ENCODE measurements at regions of chr6 and their contacts with region 1.

Region 1: GRCh38 chr6:157514659-157515496 is 133.9 kb downstream of the ZDHHC14 start:
- DNase-seq: peak; percentile 94 to 97 (median 96)
- ATAC-seq: peak; percentile 83
- H3K4me3 ChIP-seq: peak overlapping the region; percentile 36
- H3K27ac ChIP-seq: peak overlapping the region; percentile 98
- H3K4me1 ChIP-seq: peaks cover 63 to 72% of the 10 kb centered on the region in 2 experiments
- H3K27me3 ChIP-seq: no peaks in the 10 kb centered on the region
- CTCF ChIP-seq: no peak; a peak in 1 of 6 replicates
- EP300 ChIP-seq: peak; percentile 99
- POLR2A ChIP-seq: peak; percentile 73
- RAD21 ChIP-seq: no peak; a peak in 2 of 4 replicates

Region 2: GRCh38 chr6:155645325-155645724 is 1869.6 kb before region 1 on chr6:
- CTCF ChIA-PET with region 1: no interaction called
- POLR2A ChIA-PET with region 1: no interaction called
- in situ Hi-C with region 1: no loop called
- intact Hi-C with region 1: loop called (anchors 10 kb)
- DNase-seq: peak in 1 of 4 experiments; percentile 26
- ATAC-seq: peak; percentile 15; the same call in 1 of the 3 replicates
- H3K4me3 ChIP-seq: no peak overlapping the region
- H3K27ac ChIP-seq: no peak overlapping the region
- H3K4me1 ChIP-seq: peaks cover 0 to 18% of the 10 kb centered on the region in 2 experiments; a peak in 2 of 5 replicates
- H3K27me3 ChIP-seq: no peaks in the 10 kb centered on the region
- CTCF ChIP-seq: no peak
- EP300 ChIP-seq: no peak
- POLR2A ChIP-seq: no peak
- RAD21 ChIP-seq: no peak

Region 3: DNA sequence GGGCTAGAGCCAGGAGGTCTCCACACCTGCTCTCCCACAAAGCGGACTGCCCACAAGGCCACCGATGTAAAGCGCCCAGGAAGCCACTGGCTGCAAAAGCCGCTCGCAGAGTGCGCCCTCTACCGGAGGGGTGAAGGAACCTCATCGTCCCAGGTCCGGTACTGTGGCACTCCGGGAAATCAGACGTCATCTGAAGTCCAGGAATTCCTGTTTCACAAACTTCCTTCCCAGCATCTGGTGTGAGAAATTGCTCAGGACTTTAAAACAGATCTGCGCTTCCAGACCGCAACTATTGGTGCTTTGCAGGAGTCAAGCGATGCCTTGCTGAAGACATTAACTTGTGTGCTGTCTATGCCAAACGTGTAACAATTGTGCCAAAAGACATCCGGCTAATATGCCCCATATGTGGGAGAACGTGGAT is 852.8 kb before region 1 on chr6:
- CTCF ChIA-PET with region 1: no interaction called
- POLR2A ChIA-PET with region 1: no interaction called
- in situ Hi-C with region 1: no loop called
- intact Hi-C with region 1: no loop called
- DNase-seq: peak; percentile 86 to 88 (median 86)
- ATAC-seq: peak; percentile 99
- H3K4me3 ChIP-seq: 0 out of 2 replicates have a peak overlapping the region, but pooled peaks have one; percentile 6
- H3K27ac ChIP-seq: no peak overlapping the region
- H3K4me1 ChIP-seq: no peaks in the 10 kb centered on the region; a peak in 2 of 5 replicates
- H3K27me3 ChIP-seq: peaks cover 5 to 17% of the 10 kb centered on the region in 2 experiments; a peak in 4 of 5 replicates
- CTCF ChIP-seq: peak; percentile 93 to 97 (median 93)
- EP300 ChIP-seq: no peak
- POLR2A ChIP-seq: no peak
- RAD21 ChIP-seq: peak; percentile 69 to 86

Region 4: DNA sequence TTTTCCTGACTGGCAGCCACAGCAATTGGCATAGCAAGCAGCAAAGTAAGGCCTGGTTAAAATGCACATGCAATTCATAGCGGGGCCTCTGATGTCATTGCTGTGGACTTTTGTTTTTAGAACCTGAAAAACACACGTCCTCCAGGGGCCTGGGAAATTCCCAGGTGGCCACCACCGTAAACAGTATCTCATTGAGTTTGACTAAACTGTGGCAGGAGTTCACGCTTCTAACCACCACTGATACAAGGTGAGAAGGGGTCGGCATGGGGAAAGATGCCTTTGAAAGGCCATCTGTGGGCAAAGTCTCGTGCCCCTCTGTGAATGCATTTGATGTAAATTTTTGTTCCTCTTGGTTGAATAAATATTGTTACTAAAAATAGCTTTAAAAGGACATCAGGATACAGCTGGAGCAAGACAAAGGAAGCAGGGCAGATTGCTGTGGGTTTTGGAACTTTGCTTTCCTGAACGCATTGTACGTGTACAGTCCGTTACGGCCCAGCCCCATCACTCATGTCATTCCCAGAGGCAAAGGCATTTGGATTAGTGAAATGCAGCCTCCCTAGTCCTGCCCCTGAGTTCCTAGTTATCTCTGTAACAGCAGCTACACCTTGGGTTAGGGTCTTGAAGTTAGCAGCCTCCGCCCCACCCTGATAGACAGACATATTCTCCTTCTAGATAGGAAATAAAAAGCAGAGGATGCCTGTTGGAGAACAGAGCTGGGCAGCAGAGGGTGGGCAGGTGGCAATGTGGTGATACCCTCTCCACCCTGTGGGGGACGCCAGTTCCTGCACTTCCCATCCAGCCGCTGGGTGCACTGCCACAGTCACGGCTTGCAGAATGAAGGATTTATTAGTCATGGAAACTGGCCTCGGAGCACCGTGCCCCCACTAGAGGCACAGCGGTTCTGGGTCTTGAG is 53.6 kb before region 1 on chr6:
- CTCF ChIA-PET with region 1: no interaction called
- POLR2A ChIA-PET with region 1: interaction called, 9 read pairs
- in situ Hi-C with region 1: no loop called
- intact Hi-C with region 1: loop called (anchors 2 kb)
- DNase-seq: peak; percentile 76 to 90 (median 82)
- ATAC-seq: peak; percentile 85
- H3K4me3 ChIP-seq: no peak overlapping the region
- H3K27ac ChIP-seq: peak overlapping the region; percentile 54; the same call in 2 of the 3 replicates
- H3K4me1 ChIP-seq: peaks cover 51 to 66% of the 10 kb centered on the region in 2 experiments
- H3K27me3 ChIP-seq: no peaks in the 10 kb centered on the region
- CTCF ChIP-seq: peak; percentile 84 to 98 (median 91)
- EP300 ChIP-seq: peak; percentile 52; the same call in 1 of the 2 replicates
- POLR2A ChIP-seq: no peak
- RAD21 ChIP-seq: peak; percentile 67 to 79

Region 5: GRCh38 chr6:157527471-157527907 is 12.6 kb after region 1 on chr6:
- CTCF ChIA-PET with region 1: no interaction called
- POLR2A ChIA-PET with region 1: interaction called, 22 read pairs
- in situ Hi-C with region 1: no loop called
- intact Hi-C with region 1: no loop called
- DNase-seq: peak in 1 of 4 experiments; percentile 38
- ATAC-seq: peak; percentile 82
- H3K4me3 ChIP-seq: no peak overlapping the region
- H3K27ac ChIP-seq: peak overlapping the region; percentile 56; the same call in 2 of the 3 replicates
- H3K4me1 ChIP-seq: peaks cover 10 to 27% of the 10 kb centered on the region in 2 experiments
- H3K27me3 ChIP-seq: no peaks in the 10 kb centered on the region
- CTCF ChIP-seq: peak; percentile 22 to 33 (median 28); a peak in 1 of 6 replicates
- EP300 ChIP-seq: peak; percentile 24; the same call in 1 of the 2 replicates
- POLR2A ChIP-seq: no peak
- RAD21 ChIP-seq: peak; percentile 16 to 41; a peak in 1 of 4 replicates

Region 6: GRCh38 chr6:157667211-157668008 is 152.5 kb after region 1 on chr6:
- CTCF ChIA-PET with region 1: no interaction called
- POLR2A ChIA-PET with region 1: no interaction called
- in situ Hi-C with region 1: no loop called
- intact Hi-C with region 1: loop called (anchors 5 kb)
- DNase-seq: peak; percentile 82 to 83 (median 82)
- ATAC-seq: peak; percentile 95
- H3K4me3 ChIP-seq: no peak overlapping the region
- H3K27ac ChIP-seq: no peak overlapping the region
- H3K4me1 ChIP-seq: peaks cover 2 to 4% of the 10 kb centered on the region in 2 experiments; a peak in 1 of 5 replicates
- H3K27me3 ChIP-seq: no peaks in the 10 kb centered on the region
- CTCF ChIP-seq: peak; percentile 89 to 93 (median 91)
- EP300 ChIP-seq: no peak
- POLR2A ChIP-seq: no peak
- RAD21 ChIP-seq: peak; percentile 91 to 93

Measured in K562 (cell line).